ENCODE measurements at regions of chr13 and their contacts with region 1.

Region 1: GRCh38 chr13:108667205-108667604 is 37.8 kb downstream of the MYO16 start:
- DNase-seq: no peak
- ATAC-seq: no peak
- H3K4me3 Mint-ChIP-seq: no peak overlapping the region
- H3K27ac Mint-ChIP-seq: no peak overlapping the region
- H3K4me1 Mint-ChIP-seq: no peaks in the 10 kb centered on the region
- H3K27me3 Mint-ChIP-seq: no peaks in the 10 kb centered on the region

Region 2: DNA sequence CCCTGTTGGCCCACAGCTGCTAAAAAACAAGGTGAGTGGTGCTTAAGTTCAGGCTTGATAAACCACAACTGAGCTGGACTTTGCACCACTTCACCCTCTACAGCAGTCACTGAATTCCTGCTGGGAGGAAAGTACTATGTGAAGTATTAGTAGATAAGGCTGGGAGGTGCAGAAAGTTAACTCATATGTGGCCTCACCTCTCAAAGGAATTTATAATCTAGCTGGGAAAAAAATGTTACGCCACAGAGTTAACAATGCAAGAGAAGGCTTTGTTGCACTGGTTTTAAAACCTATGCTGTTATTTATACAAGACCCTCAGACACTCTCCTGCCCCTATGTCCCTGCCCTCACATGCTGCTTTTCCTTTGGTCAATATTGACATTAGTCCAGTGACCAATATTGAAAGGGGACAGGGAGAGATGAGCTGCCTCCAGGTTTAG is 512.8 kb before region 1 on chr13:
- CTCF ChIA-PET with region 1: no interaction called
- POLR2A ChIA-PET with region 1: no interaction called
- intact Hi-C with region 1: no loop called
- DNase-seq: no peak
- ATAC-seq: no peak
- H3K4me3 Mint-ChIP-seq: no peak overlapping the region
- H3K27ac Mint-ChIP-seq: no peak overlapping the region
- H3K4me1 Mint-ChIP-seq: no peaks in the 10 kb centered on the region
- H3K27me3 Mint-ChIP-seq: peaks cover 14% of the 10 kb centered on the region

Region 3: GRCh38 chr13:108643646-108644353 is 23.4 kb before region 1 on chr13:
- CTCF ChIA-PET with region 1: no interaction called
- POLR2A ChIA-PET with region 1: no interaction called
- intact Hi-C with region 1: loop called in 1 of 2 experiments (anchors 2 kb)
- DNase-seq: no peak
- ATAC-seq: no peak
- H3K4me3 Mint-ChIP-seq: no peak overlapping the region
- H3K27ac Mint-ChIP-seq: no peak overlapping the region
- H3K4me1 Mint-ChIP-seq: no peaks in the 10 kb centered on the region
- H3K27me3 Mint-ChIP-seq: no peaks in the 10 kb centered on the region

Region 4: GRCh38 chr13:108877300-108877699 is 210.1 kb after region 1 on chr13:
- CTCF ChIA-PET with region 1: no interaction called
- POLR2A ChIA-PET with region 1: no interaction called
- intact Hi-C with region 1: no loop called
- DNase-seq: no peak
- ATAC-seq: no peak
- H3K4me3 Mint-ChIP-seq: no peak overlapping the region
- H3K27ac Mint-ChIP-seq: no peak overlapping the region
- H3K4me1 Mint-ChIP-seq: no peaks in the 10 kb centered on the region
- H3K27me3 Mint-ChIP-seq: no peaks in the 10 kb centered on the region

Measured in activated CD4-positive, alpha-beta T cell treated with anti-CD3 and anti-CD28 coated beads for 36 hours (primary cell).